Adrenal gland (tissue), 19 donors: ENCODE measurements at regions of chr15 and their contacts with region 1.

Region 1: DNA sequence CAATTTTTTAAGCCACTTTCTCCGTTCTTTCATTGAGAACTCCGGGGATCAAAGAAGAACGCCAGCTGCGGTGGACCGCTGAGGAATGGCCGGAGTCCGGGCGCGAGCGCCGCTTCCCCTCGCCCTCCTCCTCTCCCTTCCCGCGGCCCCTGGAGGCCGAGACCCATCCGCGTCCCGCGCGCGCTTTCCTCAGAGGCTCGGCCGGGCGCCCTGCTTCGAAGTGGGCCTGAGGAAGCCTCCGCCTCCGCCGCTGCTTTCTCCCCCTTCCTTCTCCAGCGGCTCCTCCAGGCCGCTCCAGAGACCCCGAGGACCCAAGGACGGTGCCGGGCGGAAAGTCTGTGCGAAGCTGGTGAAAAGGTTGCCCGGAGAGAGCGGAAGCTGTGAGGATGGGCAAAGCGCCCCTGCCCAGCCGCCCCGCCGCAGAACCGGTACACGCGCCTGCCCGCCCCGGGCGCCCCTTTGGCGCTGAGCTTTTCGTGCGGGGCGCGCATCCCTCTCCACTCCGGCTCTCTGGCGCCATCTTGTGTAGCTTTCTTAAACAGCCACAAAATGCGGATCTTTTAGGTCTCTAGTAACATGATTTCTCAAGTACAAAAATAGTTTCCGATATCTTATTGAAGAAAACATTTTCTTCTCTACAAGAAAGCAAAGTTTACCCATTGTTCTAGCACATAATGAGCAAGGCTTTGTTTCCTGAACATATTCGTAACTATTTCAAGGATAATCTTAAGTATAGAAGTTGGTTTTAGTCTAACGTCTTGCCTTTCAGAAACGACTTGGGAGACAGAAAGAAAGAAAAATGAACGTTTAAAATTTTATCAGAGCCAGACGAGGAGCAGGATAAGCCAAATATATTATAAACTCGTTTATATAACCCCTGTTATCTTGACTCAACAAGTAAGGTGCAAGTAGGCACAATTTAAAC is 59.2 kb upstream of the FAM174B start:
- DNase-seq: peak; percentile 63 to 88 (median 76)
- H3K4me3 ChIP-seq: peak overlapping the region in 2 of 4 donors; percentile 46 to 70
- H3K27ac ChIP-seq: peak overlapping the region in 4 of 5 donors; percentile 25 to 83 (median 52)
- H3K4me1 ChIP-seq: no peaks in the 10 kb centered on the region
- H3K27me3 ChIP-seq: no peaks in the 10 kb centered on the region
- CTCF ChIP-seq: peak; percentile 74 to 94 (median 80)
- POLR2A ChIP-seq: no peak

Region 2: GRCh38 chr15:92521624-92522008 is 193.1 kb before region 1 on chr15:
- intact Hi-C with region 1: loop called (anchors 5 to 10 kb)
- DNase-seq: peak; percentile 71 to 94 (median 77)
- H3K4me3 ChIP-seq: no peak overlapping the region
- H3K27ac ChIP-seq: no peak overlapping the region
- H3K4me1 ChIP-seq: no peaks in the 10 kb centered on the region
- H3K27me3 ChIP-seq: no peaks in the 10 kb centered on the region
- CTCF ChIP-seq: peak; percentile 65 to 90 (median 79)
- POLR2A ChIP-seq: no peak

Region 3: DNA sequence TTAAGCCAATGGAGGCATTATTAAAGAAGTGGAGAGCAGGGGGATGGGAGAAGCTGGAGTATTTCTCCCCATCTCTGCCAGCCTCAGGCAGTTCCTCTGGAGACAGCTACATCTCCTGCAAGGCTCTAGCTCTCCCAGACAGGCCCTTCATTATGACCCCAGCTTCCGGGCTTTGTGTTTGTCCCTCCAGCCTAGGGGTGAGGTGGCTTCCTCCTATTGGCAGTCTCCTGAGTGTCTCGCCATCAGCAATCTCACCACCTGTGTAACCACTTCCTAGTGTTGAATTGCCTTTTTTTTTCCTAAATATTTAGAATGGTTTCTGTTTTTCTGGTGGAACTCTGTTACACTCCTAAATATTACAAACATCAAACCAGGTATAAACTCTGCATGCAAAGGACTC is 181.4 kb before region 1 on chr15:
- intact Hi-C with region 1: loop called (anchors 5 to 10 kb)
- DNase-seq: peak in 2 of 7 donors; percentile 6 to 17
- H3K4me3 ChIP-seq: no peak overlapping the region
- H3K27ac ChIP-seq: no peak overlapping the region
- H3K4me1 ChIP-seq: no peaks in the 10 kb centered on the region
- H3K27me3 ChIP-seq: peaks cover 3% of the 10 kb centered on the region
- CTCF ChIP-seq: no peak
- POLR2A ChIP-seq: no peak

Region 4: DNA sequence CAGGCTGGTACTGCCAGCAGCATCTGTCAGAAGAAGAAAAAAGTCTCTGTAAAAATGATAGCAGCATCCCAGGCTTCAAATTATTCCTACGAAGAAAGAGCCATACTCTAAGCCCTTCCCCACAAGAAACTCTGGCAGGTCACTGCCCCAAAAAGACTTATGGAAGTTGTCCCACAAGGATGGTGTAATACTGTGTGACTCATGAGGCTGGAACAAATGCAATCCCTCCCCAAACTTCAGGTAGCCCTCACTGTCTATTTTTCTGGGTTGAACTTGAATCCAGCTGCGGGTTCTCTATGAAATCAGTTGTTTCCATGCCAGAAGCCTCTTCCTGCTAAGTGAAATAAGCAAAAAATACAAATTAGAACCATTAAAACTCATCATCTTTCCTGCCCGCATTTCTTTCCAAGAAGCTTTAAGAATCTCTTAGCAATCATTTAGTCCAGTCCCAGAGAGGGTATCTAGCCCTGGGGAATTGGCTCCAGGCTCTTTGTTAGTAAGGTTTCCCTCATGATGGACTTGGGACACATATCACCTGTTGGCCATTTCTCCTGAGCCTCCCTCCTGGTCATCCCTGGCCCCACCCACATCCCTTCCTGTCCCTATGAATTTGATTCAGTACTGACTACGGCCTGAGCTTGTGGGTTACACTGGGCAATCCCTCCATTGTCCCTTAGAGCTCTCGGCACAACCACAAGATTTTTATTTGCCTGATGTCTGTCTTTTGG is 110.8 kb before region 1 on chr15:
- intact Hi-C with region 1: no loop called
- DNase-seq: no peak
- H3K4me3 ChIP-seq: no peak overlapping the region
- H3K27ac ChIP-seq: no peak overlapping the region
- H3K4me1 ChIP-seq: no peaks in the 10 kb centered on the region
- H3K27me3 ChIP-seq: no peaks in the 10 kb centered on the region
- CTCF ChIP-seq: no peak
- POLR2A ChIP-seq: no peak

Region 5: GRCh38 chr15:92665100-92665555 is 49.6 kb before region 1 on chr15:
- intact Hi-C with region 1: no loop called
- DNase-seq: no peak
- H3K4me3 ChIP-seq: no peak overlapping the region
- H3K27ac ChIP-seq: peak overlapping the region in 1 of 5 donors; percentile 9
- H3K4me1 ChIP-seq: peaks cover 0 to 13% of the 10 kb centered on the region in 2 donors
- H3K27me3 ChIP-seq: no peaks in the 10 kb centered on the region
- CTCF ChIP-seq: no peak
- POLR2A ChIP-seq: no peak